ENCODE measurements at regions of chr2 and their contacts with region 1.

Region 1: GRCh38 chr2:143259368-143259958 is 130.2 kb downstream of the ARHGAP15 start:
- DNase-seq: peak; percentile 87
- ATAC-seq: no peak
- H3K4me3 Mint-ChIP-seq: peak overlapping the region; percentile 61
- H3K27ac Mint-ChIP-seq: peak overlapping the region; percentile 94
- H3K4me1 Mint-ChIP-seq: peaks cover 72% of the 10 kb centered on the region
- H3K27me3 Mint-ChIP-seq: no peaks in the 10 kb centered on the region
- CTCF ChIP-seq: peak; percentile 88

Region 2: DNA sequence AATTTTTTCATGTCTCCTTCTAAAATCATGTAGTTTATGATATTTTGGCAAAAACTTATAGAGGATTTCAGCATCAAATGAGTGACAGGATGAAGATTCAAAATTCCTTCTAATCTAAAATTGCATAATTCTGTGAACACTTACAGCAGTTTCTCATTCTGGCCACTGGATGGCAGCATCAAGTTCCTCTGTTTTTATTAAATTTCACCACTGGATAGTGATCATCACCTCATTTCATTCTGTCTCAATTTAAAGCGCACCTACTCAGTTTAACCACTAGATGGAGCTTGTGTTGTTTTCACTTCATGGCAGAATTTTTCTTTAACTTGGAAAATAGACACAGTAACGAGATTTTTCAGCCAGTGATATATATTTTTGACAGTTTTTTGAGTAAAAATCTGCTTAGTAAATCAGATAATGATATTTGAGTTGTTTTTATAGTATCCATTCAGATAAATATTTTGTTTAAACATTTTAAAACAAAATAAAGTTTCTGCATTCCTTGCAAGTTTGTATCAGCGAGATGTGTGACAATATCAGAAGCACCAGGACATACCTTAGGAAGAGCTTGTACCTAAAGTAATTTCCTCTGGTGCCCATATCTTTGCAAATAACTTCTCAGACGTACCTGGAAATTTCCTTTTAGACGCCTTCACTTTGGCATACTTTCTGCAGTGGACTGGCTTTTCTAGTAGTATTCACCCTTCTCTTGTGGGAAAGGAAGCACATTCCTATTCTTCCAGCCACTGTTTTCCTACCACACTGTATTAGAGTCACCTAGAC is 225.0 kb before region 1 on chr2:
- CTCF ChIA-PET with region 1: interaction called, 20 read pairs
- POLR2A ChIA-PET with region 1: no interaction called
- intact Hi-C with region 1: loop called (anchors 2 kb)
- DNase-seq: peak; percentile 73
- ATAC-seq: peak; percentile 95
- H3K4me3 Mint-ChIP-seq: no peak overlapping the region
- H3K27ac Mint-ChIP-seq: no peak overlapping the region
- H3K4me1 Mint-ChIP-seq: peaks cover 5% of the 10 kb centered on the region
- H3K27me3 Mint-ChIP-seq: peaks cover 3% of the 10 kb centered on the region
- CTCF ChIP-seq: peak; percentile 99

Region 3: DNA sequence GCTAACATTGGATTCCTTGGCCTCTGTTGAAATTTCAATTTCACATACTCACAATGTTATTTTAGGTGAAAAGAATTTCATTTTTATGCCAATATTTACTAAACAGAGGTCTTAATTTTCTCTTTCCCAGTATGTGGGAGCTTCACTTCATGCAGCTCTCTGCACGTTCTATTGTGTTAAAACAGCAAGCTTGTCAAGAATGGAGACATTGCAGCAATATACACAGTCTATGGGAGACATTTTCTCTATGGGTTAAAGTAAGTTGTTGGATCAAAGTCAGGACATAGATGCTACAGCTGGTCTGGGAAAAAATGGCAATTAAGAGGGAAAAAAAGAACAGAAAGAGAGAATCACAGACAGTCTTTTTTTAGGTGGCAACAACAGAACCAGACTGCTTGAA is 200.6 kb before region 1 on chr2:
- CTCF ChIA-PET with region 1: no interaction called
- POLR2A ChIA-PET with region 1: no interaction called
- intact Hi-C with region 1: no loop called
- DNase-seq: no peak
- ATAC-seq: no peak
- H3K4me3 Mint-ChIP-seq: no peak overlapping the region
- H3K27ac Mint-ChIP-seq: no peak overlapping the region
- H3K4me1 Mint-ChIP-seq: no peaks in the 10 kb centered on the region
- H3K27me3 Mint-ChIP-seq: peaks cover 5% of the 10 kb centered on the region
- CTCF ChIP-seq: no peak

Region 4: GRCh38 chr2:143140864-143141661 is 118.4 kb before region 1 on chr2:
- CTCF ChIA-PET with region 1: interaction called, 10 read pairs
- POLR2A ChIA-PET with region 1: interaction called, 4 read pairs
- intact Hi-C with region 1: no loop called
- DNase-seq: no peak
- ATAC-seq: peak; percentile 54
- H3K4me3 Mint-ChIP-seq: peak overlapping the region; percentile 71
- H3K27ac Mint-ChIP-seq: peak overlapping the region; percentile 92
- H3K4me1 Mint-ChIP-seq: peaks cover 83% of the 10 kb centered on the region
- H3K27me3 Mint-ChIP-seq: no peaks in the 10 kb centered on the region
- CTCF ChIP-seq: no peak

Region 5: DNA sequence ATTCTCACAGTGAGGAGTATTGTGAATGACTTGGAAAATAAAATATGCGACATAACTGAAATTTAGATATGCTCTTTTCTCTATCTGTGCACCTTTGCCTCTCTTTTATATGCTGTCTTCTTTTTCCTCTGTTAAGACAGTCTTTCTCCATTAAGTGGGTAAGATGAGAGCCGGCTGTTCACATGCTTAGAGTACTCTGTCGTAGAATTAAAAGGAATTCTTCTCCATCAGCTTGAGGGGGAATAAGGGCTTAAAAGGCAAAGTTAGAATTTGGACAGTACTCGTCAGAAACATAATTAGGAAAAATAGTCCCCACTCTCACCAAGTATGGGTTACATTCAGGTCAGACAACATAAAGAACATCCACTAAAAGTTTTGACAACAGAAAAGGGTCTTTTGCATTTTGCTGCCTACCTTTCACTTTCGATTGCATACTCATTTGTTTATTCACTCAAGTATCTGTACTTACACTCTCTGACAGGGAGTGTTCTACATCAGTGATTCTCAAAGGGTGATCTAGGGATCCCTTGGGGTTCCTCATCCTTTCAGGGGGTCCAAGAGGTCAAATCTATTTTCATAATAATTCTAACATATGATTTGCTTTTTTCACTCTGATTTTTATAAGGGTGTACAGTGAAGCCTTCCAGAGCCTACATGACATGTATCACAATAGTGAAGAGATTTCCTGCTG is 82.2 kb before region 1 on chr2:
- CTCF ChIA-PET with region 1: interaction called, 46 read pairs
- POLR2A ChIA-PET with region 1: no interaction called
- intact Hi-C with region 1: no loop called
- DNase-seq: no peak
- ATAC-seq: peak; percentile 67
- H3K4me3 Mint-ChIP-seq: peak overlapping the region; percentile 72
- H3K27ac Mint-ChIP-seq: peak overlapping the region; percentile 94
- H3K4me1 Mint-ChIP-seq: peaks cover 55% of the 10 kb centered on the region
- H3K27me3 Mint-ChIP-seq: no peaks in the 10 kb centered on the region
- CTCF ChIP-seq: no peak

Region 6: DNA sequence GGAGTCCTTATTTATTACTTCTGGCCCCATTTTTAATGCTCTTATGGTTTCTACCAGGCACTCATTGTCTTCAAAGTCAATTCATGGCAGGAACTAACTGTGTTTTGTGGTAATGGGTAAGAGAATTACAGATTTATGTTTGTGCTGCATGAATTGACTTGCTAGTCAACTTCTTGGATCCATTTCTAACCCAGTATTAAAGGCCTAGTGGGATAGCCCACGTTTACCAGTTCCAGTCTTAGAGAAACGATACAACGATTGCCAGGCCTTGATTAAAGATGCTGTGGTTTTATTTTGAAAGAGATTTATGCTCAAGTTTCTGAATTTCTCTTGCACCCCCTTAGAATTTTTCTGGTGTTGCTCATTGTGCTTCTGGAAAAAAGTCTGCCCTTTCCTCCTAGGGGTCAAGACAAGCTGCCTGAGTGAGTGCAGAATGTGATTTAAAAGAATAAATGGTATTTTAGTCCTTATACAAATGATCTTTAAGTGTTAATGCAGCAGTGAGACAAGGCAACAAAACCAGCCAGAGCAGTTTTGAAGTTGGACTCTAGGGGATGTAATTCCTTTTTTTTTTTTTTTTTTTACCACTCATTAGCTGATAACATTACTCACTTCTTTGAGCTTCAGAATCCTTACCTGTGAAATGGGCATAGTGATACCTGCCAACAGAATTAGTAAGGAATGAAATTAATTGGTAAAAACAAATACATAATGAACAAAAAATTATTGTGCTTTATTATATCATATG is 28.8 kb before region 1 on chr2:
- CTCF ChIA-PET with region 1: interaction called, 10 read pairs
- POLR2A ChIA-PET with region 1: no interaction called
- intact Hi-C with region 1: no loop called
- DNase-seq: no peak
- ATAC-seq: no peak
- H3K4me3 Mint-ChIP-seq: no peak overlapping the region
- H3K27ac Mint-ChIP-seq: peak overlapping the region; percentile 25
- H3K4me1 Mint-ChIP-seq: peaks cover 37% of the 10 kb centered on the region
- H3K27me3 Mint-ChIP-seq: no peaks in the 10 kb centered on the region
- CTCF ChIP-seq: no peak

Region 7: DNA sequence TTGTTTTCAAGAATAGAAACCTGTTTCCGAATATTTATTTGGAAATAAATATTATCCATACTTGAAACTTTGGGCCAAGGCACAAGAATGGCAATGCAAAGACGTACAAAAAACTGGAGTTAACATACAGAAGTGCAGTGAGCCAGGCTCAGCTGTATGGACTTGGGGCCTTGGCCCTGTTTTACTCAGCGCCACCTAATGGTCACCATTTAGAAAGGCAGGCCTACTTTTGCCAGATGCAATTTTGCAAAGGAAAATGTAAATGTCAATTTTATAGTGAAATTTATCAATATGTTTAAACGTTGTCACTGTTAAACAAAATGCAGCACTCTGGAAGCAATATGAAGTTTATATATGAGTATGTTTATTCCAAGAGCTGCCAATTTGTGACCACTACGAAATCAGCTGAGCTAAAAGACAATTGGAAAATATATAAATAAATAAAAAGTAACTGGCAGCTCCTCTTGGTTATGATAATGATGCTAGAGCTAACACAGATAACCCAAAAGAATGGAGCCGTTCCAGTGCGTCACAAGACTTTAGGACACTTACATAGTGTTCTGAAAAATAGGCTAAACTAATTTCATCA is 24.7 kb after region 1 on chr2:
- CTCF ChIA-PET with region 1: interaction called, 30 read pairs
- POLR2A ChIA-PET with region 1: no interaction called
- intact Hi-C with region 1: no loop called
- DNase-seq: peak; percentile 38
- ATAC-seq: peak; percentile 85
- H3K4me3 Mint-ChIP-seq: no peak overlapping the region
- H3K27ac Mint-ChIP-seq: peak overlapping the region; percentile 42
- H3K4me1 Mint-ChIP-seq: peaks cover 28% of the 10 kb centered on the region
- H3K27me3 Mint-ChIP-seq: no peaks in the 10 kb centered on the region
- CTCF ChIP-seq: peak; percentile 79